Ovary (tissue), 10 donors: ENCODE measurements at regions of chr1 and their contacts with region 1.

Region 1: GRCh38 chr1:71364236-71364635 is 283.4 kb upstream of the ZRANB2 start:
- DNase-seq: no peak
- H3K4me3 ChIP-seq: no peak overlapping the region
- H3K27ac ChIP-seq: no peak overlapping the region
- H3K4me1 ChIP-seq: peaks cover 2% of the 10 kb centered on the region
- H3K27me3 ChIP-seq: no peaks in the 10 kb centered on the region
- CTCF ChIP-seq: no peak
- EP300 ChIP-seq: no peak
- POLR2A ChIP-seq: no peak

Region 2: GRCh38 chr1:70528590-70529333 is 835.5 kb before region 1 on chr1:
- intact Hi-C with region 1: loop called in 1 of 4 experiments (anchors 10 kb)
- DNase-seq: peak in 3 of 5 donors; percentile 18 to 42 (median 18)
- H3K4me3 ChIP-seq: no peak overlapping the region
- H3K27ac ChIP-seq: no peak overlapping the region
- H3K4me1 ChIP-seq: no peaks in the 10 kb centered on the region
- H3K27me3 ChIP-seq: no peaks in the 10 kb centered on the region
- CTCF ChIP-seq: peak in 2 of 3 donors; percentile 8 to 43
- EP300 ChIP-seq: no peak
- POLR2A ChIP-seq: no peak

Region 3: DNA sequence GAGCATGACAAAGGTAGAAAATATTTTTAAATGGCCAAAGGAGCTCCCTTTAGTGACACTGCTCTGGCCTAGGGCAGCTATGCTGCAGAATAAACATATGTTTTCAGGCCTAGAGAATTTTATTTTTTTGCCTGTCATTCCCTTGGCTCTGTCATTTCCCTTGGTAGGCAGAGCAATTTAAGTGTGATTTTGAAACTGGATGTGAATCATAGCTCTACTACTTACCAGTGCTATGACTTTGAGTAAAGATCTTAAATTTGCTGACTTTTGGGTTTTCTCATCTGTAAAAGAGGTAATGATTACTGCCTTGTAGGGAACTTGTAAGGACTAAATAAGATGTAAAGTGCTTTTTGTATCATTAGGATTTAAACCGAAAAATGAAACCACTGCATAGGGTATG is 94.4 kb before region 1 on chr1:
- intact Hi-C with region 1: no loop called
- DNase-seq: no peak
- H3K4me3 ChIP-seq: no peak overlapping the region
- H3K27ac ChIP-seq: no peak overlapping the region
- H3K4me1 ChIP-seq: no peaks in the 10 kb centered on the region
- H3K27me3 ChIP-seq: no peaks in the 10 kb centered on the region
- CTCF ChIP-seq: no peak
- EP300 ChIP-seq: no peak
- POLR2A ChIP-seq: no peak

Region 4: GRCh38 chr1:71940261-71940660 is 576.0 kb after region 1 on chr1:
- intact Hi-C with region 1: no loop called
- DNase-seq: no peak
- H3K4me3 ChIP-seq: no peak overlapping the region
- H3K27ac ChIP-seq: no peak overlapping the region
- H3K4me1 ChIP-seq: no peaks in the 10 kb centered on the region
- H3K27me3 ChIP-seq: no peaks in the 10 kb centered on the region
- CTCF ChIP-seq: no peak
- EP300 ChIP-seq: no peak
- POLR2A ChIP-seq: no peak